T-cell (primary cell): ENCODE measurements at regions of chr13 and their contacts with region 1.

Region 1: DNA sequence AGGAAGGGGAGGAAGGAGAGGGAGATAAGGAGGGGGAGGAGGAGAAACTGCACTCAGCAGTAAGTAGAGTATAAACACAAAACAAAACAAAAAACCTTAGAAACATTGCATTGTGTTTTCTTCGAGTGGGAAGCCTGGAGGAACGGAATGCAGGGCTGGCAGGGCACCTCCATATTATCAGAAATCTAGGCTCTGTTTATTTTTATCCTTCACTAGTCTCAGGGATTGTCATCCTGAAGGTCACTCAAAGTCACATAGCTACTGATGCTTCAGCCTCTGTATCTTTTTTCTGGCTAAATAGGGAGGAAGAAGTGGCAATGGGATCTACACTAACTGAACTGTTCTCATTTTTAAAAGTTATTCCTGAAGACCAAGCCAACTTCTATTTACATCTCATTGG is 467.8 kb downstream of the KCTD12 start:
- DNase-seq: no peak
- ATAC-seq: no peak
- H3K4me3 ChIP-seq: no peak overlapping the region
- H3K4me3 Mint-ChIP-seq: no peak overlapping the region
- H3K27ac ChIP-seq: no peak overlapping the region
- H3K27ac Mint-ChIP-seq: no peak overlapping the region
- H3K4me1 ChIP-seq: no peaks in the 10 kb centered on the region
- H3K4me1 Mint-ChIP-seq: no peaks in the 10 kb centered on the region
- H3K27me3 ChIP-seq: no peaks in the 10 kb centered on the region
- H3K27me3 Mint-ChIP-seq: no peaks in the 10 kb centered on the region

Region 2: GRCh38 chr13:76351541-76352229 is 66.7 kb before region 1 on chr13:
- CTCF ChIA-PET with region 1: no interaction called
- POLR2A ChIA-PET with region 1: interaction called in 1 of 2 experiments, 11 read pairs
- DNase-seq: no peak
- ATAC-seq: no peak
- H3K4me3 ChIP-seq: no peak overlapping the region
- H3K4me3 Mint-ChIP-seq: no peak overlapping the region
- H3K27ac ChIP-seq: no peak overlapping the region
- H3K27ac Mint-ChIP-seq: no peak overlapping the region
- H3K4me1 ChIP-seq: no peaks in the 10 kb centered on the region
- H3K4me1 Mint-ChIP-seq: no peaks in the 10 kb centered on the region
- H3K27me3 ChIP-seq: no peaks in the 10 kb centered on the region
- H3K27me3 Mint-ChIP-seq: no peaks in the 10 kb centered on the region

Region 3: GRCh38 chr13:76723551-76724232 is 305.3 kb after region 1 on chr13:
- CTCF ChIA-PET with region 1: no interaction called
- POLR2A ChIA-PET with region 1: no interaction called
- DNase-seq: peak in 23 of 35 experiments; percentile 0 to 38 (median 8)
- ATAC-seq: peak; percentile 74 to 90 (median 87)
- H3K4me3 ChIP-seq: no peak overlapping the region
- H3K4me3 Mint-ChIP-seq: no peak overlapping the region
- H3K27ac ChIP-seq: no peak overlapping the region
- H3K27ac Mint-ChIP-seq: no peak overlapping the region
- H3K4me1 ChIP-seq: peaks cover 8 to 12% of the 10 kb centered on the region in 2 experiments
- H3K4me1 Mint-ChIP-seq: no peaks in the 10 kb centered on the region
- H3K27me3 ChIP-seq: peaks cover 0 to 5% of the 10 kb centered on the region in 2 experiments
- H3K27me3 Mint-ChIP-seq: no peaks in the 10 kb centered on the region